Endothelial cell of umbilical vein (primary cell): ENCODE measurements at regions of chr1 and their contacts with region 1.

Region 1: GRCh38 chr1:198253668-198254067 is 96.9 kb downstream of the NEK7 start:
- DNase-seq: peak; percentile 47
- H3K4me3 ChIP-seq: no peak overlapping the region
- H3K27ac ChIP-seq: no peak overlapping the region
- H3K4me1 ChIP-seq: peaks cover 12% of the 10 kb centered on the region
- H3K27me3 ChIP-seq: no peaks in the 10 kb centered on the region
- CTCF ChIP-seq: no peak
- POLR2A ChIP-seq: no peak

Region 2: DNA sequence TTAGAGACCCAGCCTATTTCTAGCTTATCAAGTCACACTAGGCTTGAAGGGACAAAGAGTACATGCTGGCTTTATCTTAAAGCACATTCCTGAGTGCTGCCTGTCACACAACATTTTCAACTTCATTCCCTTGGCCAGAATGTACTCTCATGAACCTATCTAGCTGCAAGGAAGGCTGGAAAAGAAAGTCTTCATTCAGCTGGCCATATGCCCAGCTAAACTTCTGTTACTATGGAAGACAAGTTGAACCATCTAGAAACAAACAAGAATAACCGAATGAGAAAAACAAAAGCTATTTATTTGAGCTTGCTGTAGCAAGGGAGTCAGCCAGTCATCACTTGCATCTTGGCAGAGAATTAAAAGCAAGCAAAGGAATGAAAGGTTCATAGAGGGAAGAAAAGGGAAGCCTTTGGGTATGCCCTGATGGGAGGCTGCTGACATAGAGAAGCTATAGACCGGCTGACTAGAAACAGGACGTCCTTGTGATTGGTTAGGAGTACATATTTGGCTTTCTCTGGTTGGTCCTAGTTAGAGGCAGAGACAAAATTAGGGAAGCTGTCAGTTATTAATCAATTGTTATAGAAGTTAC is 11.5 kb after region 1 on chr1:
- CTCF ChIA-PET with region 1: interaction called, 12 read pairs
- POLR2A ChIA-PET with region 1: no interaction called
- dilution Hi-C with region 1: no loop called
- intact Hi-C with region 1: no loop called
- DNase-seq: peak; percentile 61
- H3K4me3 ChIP-seq: no peak overlapping the region
- H3K27ac ChIP-seq: no peak overlapping the region
- H3K4me1 ChIP-seq: peaks cover 42% of the 10 kb centered on the region
- H3K27me3 ChIP-seq: no peaks in the 10 kb centered on the region
- CTCF ChIP-seq: no peak
- POLR2A ChIP-seq: no peak